ENCODE measurements at regions of chr19 and their contacts with region 1.

Region 1: GRCh38 chr19:17775245-17775916 is 19.6 kb upstream of the B3GNT3 start:
- DNase-seq: peak in 22 of 42 donors; percentile 7 to 73 (median 45)

Region 2: GRCh38 chr19:17718947-17719711 is 56.3 kb before region 1 on chr19 and contains the start of gene MAP1S:
- intact Hi-C with region 1: loop called (anchors 5 kb)
- DNase-seq: peak; percentile 20 to 86 (median 73)

Region 3: GRCh38 chr19:17735410-17735809 is 40.0 kb before region 1 on chr19:
- intact Hi-C with region 1: loop called (anchors 2 kb)
- DNase-seq: no peak